H1 (cell line): ENCODE measurements at regions of chr16 and their contacts with region 1.

Region 1: GRCh38 chr16:2777231-2777902 is at the start of gene ELOB:
- DNase-seq: peak in 1 of 2 experiments; percentile 91
- H3K4me3 ChIP-seq: peak within 1 kb of the TSS; percentile 94 to 99 (median 96)
- H3K27ac ChIP-seq: peak within 1 kb of the TSS; percentile 100
- H3K4me1 ChIP-seq: peaks cover 0 to 4% (median under 1%) of the 10 kb centered on the region in 4 experiments; a peak in 5 of 7 replicates
- H3K27me3 ChIP-seq: no peaks in the 10 kb centered on the region; a peak in 1 of 7 replicates
- CTCF ChIP-seq: no peak
- EP300 ChIP-seq: peak in 1 of 2 experiments; percentile 31; a peak in 1 of 3 replicates
- POLR2A ChIP-seq: peak; percentile 72 to 86; a peak in 2 of 3 replicates
- RAD21 ChIP-seq: no peak
- total RNA-seq, gene ELOB: 237 and 248 TPM in 2 replicates

Region 2: GRCh38 chr16:2317231-2318020 is 459.9 kb before region 1 on chr16:
- CTCF ChIA-PET with region 1: no interaction called
- POLR2A ChIA-PET with region 1: no interaction called
- DNase-seq: no peak
- H3K4me3 ChIP-seq: no peak overlapping the region
- H3K27ac ChIP-seq: no peak overlapping the region
- H3K4me1 ChIP-seq: peaks cover 0 to 3% (median 1%) of the 10 kb centered on the region in 4 experiments; a peak in 2 of 7 replicates
- H3K27me3 ChIP-seq: no peaks in the 10 kb centered on the region
- CTCF ChIP-seq: no peak
- EP300 ChIP-seq: no peak
- POLR2A ChIP-seq: no peak
- RAD21 ChIP-seq: no peak

Region 3: GRCh38 chr16:2715519-2715918 is 61.8 kb before region 1 on chr16:
- CTCF ChIA-PET with region 1: no interaction called
- POLR2A ChIA-PET with region 1: no interaction called
- DNase-seq: peak in 1 of 2 experiments; percentile 80
- H3K4me3 ChIP-seq: peak overlapping the region in 1 of 4 experiments; percentile 40; a peak in 1 of 8 replicates
- H3K27ac ChIP-seq: no peak overlapping the region
- H3K4me1 ChIP-seq: peaks cover 0 to 12% (median 5%) of the 10 kb centered on the region in 4 experiments; a peak in 4 of 7 replicates
- H3K27me3 ChIP-seq: no peaks in the 10 kb centered on the region; a peak in 1 of 7 replicates
- CTCF ChIP-seq: no peak
- EP300 ChIP-seq: no peak
- POLR2A ChIP-seq: no peak
- RAD21 ChIP-seq: no peak

Region 4: GRCh38 chr16:2764718-2765117 is 12.6 kb before region 1 on chr16:
- CTCF ChIA-PET with region 1: no interaction called
- POLR2A ChIA-PET with region 1: interaction called, 84 read pairs
- DNase-seq: no peak
- H3K4me3 ChIP-seq: no peak overlapping the region
- H3K27ac ChIP-seq: no peak overlapping the region
- H3K4me1 ChIP-seq: no peaks in the 10 kb centered on the region; a peak in 1 of 7 replicates
- H3K27me3 ChIP-seq: no peaks in the 10 kb centered on the region
- CTCF ChIP-seq: no peak
- EP300 ChIP-seq: no peak
- POLR2A ChIP-seq: no peak; a peak in 1 of 3 replicates
- RAD21 ChIP-seq: no peak

Region 5: GRCh38 chr16:2895815-2896214 is 118.4 kb after region 1 on chr16:
- CTCF ChIA-PET with region 1: no interaction called
- POLR2A ChIA-PET with region 1: no interaction called
- DNase-seq: no peak
- H3K4me3 ChIP-seq: no peak overlapping the region
- H3K27ac ChIP-seq: no peak overlapping the region
- H3K4me1 ChIP-seq: peaks cover 0 to 3% (median 0%) of the 10 kb centered on the region in 4 experiments; a peak in 2 of 7 replicates
- H3K27me3 ChIP-seq: no peaks in the 10 kb centered on the region
- CTCF ChIP-seq: no peak
- EP300 ChIP-seq: no peak
- POLR2A ChIP-seq: no peak
- RAD21 ChIP-seq: no peak